B cell (primary cell): ENCODE measurements at regions of chr1 and their contacts with region 1.

Region 1: GRCh38 chr1:211698161-211699026 is 23.0 kb upstream of the NEK2 start:
- DNase-seq: peak; percentile 76
- ATAC-seq: peak; percentile 45
- H3K4me3 ChIP-seq: peak overlapping the region in 3 of 5 experiments; percentile 21 to 44 (median 34)
- H3K4me3 Mint-ChIP-seq: peak overlapping the region; percentile 76
- H3K27ac ChIP-seq: peak overlapping the region in 1 of 2 donors; percentile 11
- H3K27ac Mint-ChIP-seq: peak overlapping the region; percentile 59
- H3K4me1 ChIP-seq: peaks cover 44 to 52% of the 10 kb centered on the region in 2 donors
- H3K4me1 Mint-ChIP-seq: peaks cover 53% of the 10 kb centered on the region
- H3K27me3 ChIP-seq: peaks cover 0 to 5% (median 0%) of the 10 kb centered on the region in 4 experiments
- H3K27me3 Mint-ChIP-seq: peaks cover 5% of the 10 kb centered on the region
- CTCF ChIP-seq: peak; percentile 97

Region 2: DNA sequence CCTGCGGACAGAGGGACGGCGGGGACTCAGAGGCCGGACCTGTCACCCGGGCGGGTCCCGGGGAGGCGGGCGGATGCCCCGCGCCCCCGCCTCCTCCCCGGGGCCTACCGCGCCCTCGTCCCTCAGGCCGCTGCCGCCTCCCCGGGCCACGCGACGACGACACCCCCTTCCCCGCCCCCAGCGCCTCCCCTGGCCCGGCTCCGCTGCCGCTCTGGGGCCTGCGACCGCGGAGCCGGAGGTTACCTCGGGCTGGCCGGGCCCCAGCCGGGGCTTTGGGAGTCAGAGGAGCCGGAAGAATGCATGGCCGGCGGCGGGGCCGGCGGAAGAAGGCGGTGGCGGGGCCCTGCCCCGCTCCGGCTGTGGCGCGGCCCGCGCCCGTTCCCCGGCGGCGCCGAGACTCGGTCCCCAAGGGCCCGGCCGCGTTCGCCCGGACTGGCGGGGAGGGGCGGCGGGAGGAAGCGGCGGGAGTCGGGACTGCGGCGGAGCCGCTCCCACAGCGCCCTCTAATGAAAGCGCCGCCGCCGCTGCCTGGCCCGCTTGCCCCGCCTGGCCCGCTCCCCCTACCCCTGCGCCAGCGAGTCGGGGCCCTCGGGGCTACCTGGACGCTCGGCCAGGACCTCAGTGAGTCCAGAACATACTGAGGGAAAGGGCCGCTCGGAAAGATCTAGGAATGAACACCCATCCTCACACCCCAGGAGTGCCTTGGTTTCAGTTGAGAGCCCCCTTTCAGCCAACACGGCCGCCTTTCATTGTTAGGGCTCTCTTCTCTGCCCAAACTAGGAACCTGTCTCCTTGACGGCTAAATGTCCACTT is 132.1 kb after region 1 on chr1 and contains the start of gene LPGAT1:
- CTCF ChIA-PET with region 1: interaction called, 5 read pairs
- POLR2A ChIA-PET with region 1: no interaction called
- intact Hi-C with region 1: loop called (anchors 5 kb)
- DNase-seq: peak; percentile 86
- ATAC-seq: peak; percentile 85
- H3K4me3 ChIP-seq: peak within 1 kb of the TSS; percentile 48 to 85 (median 72)
- H3K4me3 Mint-ChIP-seq: peak within 1 kb of the TSS; percentile 94
- H3K27ac ChIP-seq: peak within 1 kb of the TSS; percentile 39 to 80
- H3K27ac Mint-ChIP-seq: peak within 1 kb of the TSS; percentile 91
- H3K4me1 ChIP-seq: peaks cover 44 to 49% of the 10 kb centered on the region in 2 donors
- H3K4me1 Mint-ChIP-seq: peaks cover 58% of the 10 kb centered on the region
- H3K27me3 ChIP-seq: no peaks in the 10 kb centered on the region
- H3K27me3 Mint-ChIP-seq: no peaks in the 10 kb centered on the region
- CTCF ChIP-seq: peak; percentile 76
- total RNA-seq, gene LPGAT1: 60.1 and 63.8 TPM in 2 replicates